Activated CD4-positive, alpha-beta memory T cell treated with anti-CD3 and anti-CD28 coated beads, Interleukin-2, amount 10 ng/mL, durations not matched to agents 7 days and 5 days (primary cell): ENCODE measurements at regions of chr2 and their contacts with region 1.

Region 1: DNA sequence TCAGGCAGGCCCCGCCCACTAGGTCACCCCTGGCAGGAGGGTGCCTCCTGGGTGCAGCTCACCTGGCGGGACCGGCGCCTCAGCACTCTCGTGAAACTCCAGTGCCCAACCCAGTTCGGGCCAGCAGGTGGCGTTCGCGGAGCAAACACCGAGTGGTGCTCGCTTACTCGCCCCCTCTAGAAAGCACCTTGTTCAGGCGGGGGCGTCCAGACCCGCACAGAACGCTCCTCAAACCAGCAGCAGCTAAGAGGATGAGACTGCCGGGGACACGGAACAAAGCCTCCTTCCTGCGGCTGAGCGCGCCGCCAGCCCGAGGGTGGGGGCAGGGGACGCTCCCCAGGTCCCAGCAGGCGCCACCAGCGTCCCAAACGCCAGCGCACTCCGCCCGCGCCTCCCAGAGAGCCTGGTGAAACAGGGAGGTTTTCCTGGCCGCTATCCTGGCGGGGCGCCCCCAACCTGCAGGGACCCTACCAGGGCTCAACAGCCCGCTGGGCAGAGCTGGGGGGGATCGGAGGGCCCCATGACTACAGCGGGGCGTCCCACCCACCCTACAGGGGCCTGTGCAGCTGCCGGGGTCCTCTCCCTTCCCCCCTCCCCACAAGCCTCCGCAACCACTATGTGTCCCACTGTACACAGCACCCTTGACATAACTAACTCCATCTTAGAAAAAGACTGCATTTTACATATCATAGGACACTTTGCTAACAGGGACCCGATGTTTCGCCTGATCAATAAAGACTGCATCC is 44.7 kb downstream of the MRPS5 start:
- DNase-seq: peak; percentile 93
- H3K4me3 Mint-ChIP-seq: peak overlapping the region; percentile 78
- H3K27ac Mint-ChIP-seq: peak overlapping the region; percentile 98
- H3K4me1 Mint-ChIP-seq: peaks cover 79% of the 10 kb centered on the region
- H3K27me3 Mint-ChIP-seq: no peaks in the 10 kb centered on the region

Region 2: GRCh38 chr2:94956797-94957391 is 120.1 kb before region 1 on chr2:
- CTCF ChIA-PET with region 1: interaction called, 10 read pairs
- POLR2A ChIA-PET with region 1: no interaction called
- DNase-seq: peak; percentile 38
- H3K4me3 Mint-ChIP-seq: no peak overlapping the region
- H3K27ac Mint-ChIP-seq: no peak overlapping the region
- H3K4me1 Mint-ChIP-seq: no peaks in the 10 kb centered on the region
- H3K27me3 Mint-ChIP-seq: peaks cover 37% of the 10 kb centered on the region

Region 3: DNA sequence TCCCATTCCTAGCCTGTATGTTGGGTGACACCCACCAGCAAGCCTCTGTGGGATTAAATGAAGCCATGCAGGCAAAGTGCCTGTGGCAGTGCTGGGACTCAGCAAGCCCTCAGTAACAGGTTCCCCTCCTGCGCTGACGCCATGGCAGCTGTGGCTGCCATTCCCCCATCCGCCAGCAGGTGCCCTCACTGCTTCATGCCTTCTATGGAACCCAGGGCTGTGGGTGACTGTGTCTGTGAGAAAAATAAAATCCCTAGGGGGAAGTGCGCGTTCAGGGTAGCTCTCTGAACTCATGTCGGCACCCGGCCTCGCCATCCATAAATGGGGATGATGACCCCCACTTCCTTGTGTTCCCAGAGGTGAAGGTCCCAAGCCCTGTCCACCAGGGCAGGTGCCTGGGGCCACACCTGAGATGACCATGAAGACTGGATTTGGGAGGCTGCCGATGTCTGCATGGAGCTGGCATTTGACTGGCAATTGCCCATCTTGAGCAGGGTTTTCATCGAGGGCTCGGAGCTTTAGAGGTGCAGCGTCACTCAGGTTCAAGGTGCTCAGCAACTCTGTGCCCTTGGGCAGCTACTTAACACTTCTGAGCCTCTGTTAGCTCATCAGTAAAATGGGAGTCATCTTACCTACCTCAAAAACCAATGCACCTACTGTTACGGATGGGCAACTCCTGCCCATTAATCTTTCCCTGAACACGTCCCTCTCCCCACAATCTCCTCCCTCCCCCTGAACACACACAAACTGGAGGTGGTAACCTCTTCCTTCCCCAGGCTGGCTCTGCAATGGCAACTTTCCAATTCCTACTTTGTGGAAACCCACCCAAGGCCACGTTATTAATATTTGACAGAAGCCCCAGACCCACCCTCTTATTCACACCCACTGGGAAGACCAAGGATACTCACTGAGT is 54.4 kb before region 1 on chr2:
- CTCF ChIA-PET with region 1: interaction called, 397 read pairs
- POLR2A ChIA-PET with region 1: interaction called, 432 read pairs
- DNase-seq: peak; percentile 89
- H3K4me3 Mint-ChIP-seq: peak overlapping the region; percentile 78
- H3K27ac Mint-ChIP-seq: peak overlapping the region; percentile 84
- H3K4me1 Mint-ChIP-seq: peaks cover 56% of the 10 kb centered on the region
- H3K27me3 Mint-ChIP-seq: peaks cover 5% of the 10 kb centered on the region

Region 4: DNA sequence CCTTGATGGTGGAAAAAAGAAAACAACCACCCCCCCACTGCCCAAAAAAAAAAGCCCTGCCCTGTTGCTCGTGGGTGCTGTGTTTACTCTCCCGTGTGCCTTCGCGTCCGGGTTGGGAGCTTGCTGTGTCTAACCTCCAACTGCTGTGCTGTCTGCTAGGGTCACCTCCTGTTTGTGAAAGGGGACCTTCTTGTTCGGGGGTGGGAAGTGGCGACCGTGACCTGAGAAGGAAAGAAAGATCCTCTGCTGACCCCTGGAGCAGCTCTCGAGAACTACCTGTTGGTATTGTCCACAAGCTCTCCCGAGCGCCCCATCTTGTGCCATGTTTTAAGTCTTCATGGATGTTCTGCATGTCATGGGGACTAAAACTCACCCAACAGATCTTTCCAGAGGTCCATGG is 23.4 kb before region 1 on chr2:
- CTCF ChIA-PET with region 1: interaction called, 16 read pairs
- POLR2A ChIA-PET with region 1: interaction called, 286 read pairs
- DNase-seq: no peak
- H3K4me3 Mint-ChIP-seq: no peak overlapping the region
- H3K27ac Mint-ChIP-seq: no peak overlapping the region
- H3K4me1 Mint-ChIP-seq: peaks cover 48% of the 10 kb centered on the region
- H3K27me3 Mint-ChIP-seq: no peaks in the 10 kb centered on the region

Region 5: DNA sequence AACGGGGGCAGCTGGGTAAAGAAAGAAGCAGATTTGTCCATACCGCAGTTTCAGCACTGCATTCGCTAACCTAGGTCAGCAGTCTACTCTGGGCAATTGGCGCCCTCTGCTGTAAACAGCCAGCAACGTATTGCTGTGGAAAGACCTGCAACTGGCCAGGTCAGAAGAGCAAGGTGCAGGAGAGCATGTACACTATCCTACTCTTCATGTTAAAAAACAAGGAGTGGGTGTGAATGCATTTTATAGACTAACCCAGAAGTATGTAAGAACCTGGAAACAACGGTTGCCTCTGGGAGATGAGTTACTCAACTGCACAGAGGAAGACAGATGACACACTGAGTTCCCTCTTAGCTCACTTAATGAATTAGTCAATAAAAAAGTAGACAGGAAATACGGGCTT is 38.5 kb after region 1 on chr2:
- CTCF ChIA-PET with region 1: interaction called, 202 read pairs
- POLR2A ChIA-PET with region 1: interaction called, 32 read pairs
- DNase-seq: peak; percentile 81
- H3K4me3 Mint-ChIP-seq: no peak overlapping the region
- H3K27ac Mint-ChIP-seq: peak overlapping the region; percentile 18
- H3K4me1 Mint-ChIP-seq: peaks cover 42% of the 10 kb centered on the region
- H3K27me3 Mint-ChIP-seq: no peaks in the 10 kb centered on the region

Region 6: GRCh38 chr2:95159690-95160449 is 82.9 kb after region 1 on chr2 and contains the start of gene ZNF514:
- CTCF ChIA-PET with region 1: interaction called, 15 read pairs
- POLR2A ChIA-PET with region 1: interaction called, 16 read pairs
- DNase-seq: peak; percentile 73
- H3K4me3 Mint-ChIP-seq: peak within 1 kb of the TSS; percentile 86
- H3K27ac Mint-ChIP-seq: peak within 1 kb of the TSS; percentile 76
- H3K4me1 Mint-ChIP-seq: peaks cover 23% of the 10 kb centered on the region
- H3K27me3 Mint-ChIP-seq: no peaks in the 10 kb centered on the region
- total RNA-seq, gene ZNF514: 12.9 to 13.4 TPM

Region 7: GRCh38 chr2:95174031-95174542 is 97.1 kb after region 1 on chr2:
- CTCF ChIA-PET with region 1: no interaction called
- POLR2A ChIA-PET with region 1: no interaction called
- DNase-seq: no peak
- H3K4me3 Mint-ChIP-seq: no peak overlapping the region
- H3K27ac Mint-ChIP-seq: no peak overlapping the region
- H3K4me1 Mint-ChIP-seq: no peaks in the 10 kb centered on the region
- H3K27me3 Mint-ChIP-seq: no peaks in the 10 kb centered on the region

Region 8: GRCh38 chr2:95402370-95403203 is 325.6 kb after region 1 on chr2 and contains the start of gene FAHD2A:
- CTCF ChIA-PET with region 1: no interaction called
- POLR2A ChIA-PET with region 1: no interaction called
- DNase-seq: peak; percentile 96
- H3K4me3 Mint-ChIP-seq: peak within 1 kb of the TSS; percentile 99
- H3K27ac Mint-ChIP-seq: peak within 1 kb of the TSS; percentile 89
- H3K4me1 Mint-ChIP-seq: peaks cover 23% of the 10 kb centered on the region
- H3K27me3 Mint-ChIP-seq: no peaks in the 10 kb centered on the region
- total RNA-seq, gene FAHD2A: 35.8 to 37.3 TPM